Left colon (tissue), 2 donors: ENCODE measurements at regions of chr15 and their contacts with region 1.

Region 1: GRCh38 chr15:45268135-45268534 is 16.1 kb downstream of the SLC28A2 start:
- DNase-seq: peak in 1 of 2 donors; percentile 53
- ATAC-seq: peak; percentile 67

Region 2: GRCh38 chr15:45212493-45212892 is 55.6 kb before region 1 on chr15:
- intact Hi-C with region 1: loop called in 1 of 2 experiments (anchors 10 kb)
- DNase-seq: no peak
- ATAC-seq: no peak

Region 3: DNA sequence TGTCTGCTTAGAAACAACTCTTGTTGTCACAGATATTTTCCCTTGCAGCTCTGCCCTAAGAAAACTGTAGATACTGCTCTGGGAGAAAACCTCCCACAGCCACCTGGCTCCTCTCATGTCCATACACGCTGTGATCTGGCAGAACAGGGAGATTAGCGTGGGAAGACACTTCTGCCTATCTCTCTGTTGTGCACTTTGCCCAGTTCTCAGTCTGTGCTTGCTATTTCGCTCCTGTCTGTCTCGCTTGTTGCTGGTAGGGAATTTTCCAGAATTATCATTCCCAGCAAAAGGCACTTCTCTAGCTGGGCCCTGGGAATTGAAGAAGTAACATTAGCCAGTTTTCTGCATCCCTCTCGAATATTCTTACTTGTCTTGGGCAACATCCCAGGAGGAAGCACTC is 118.3 kb after region 1 on chr15:
- intact Hi-C with region 1: no loop called
- DNase-seq: no peak
- ATAC-seq: peak; percentile 50

Region 4: GRCh38 chr15:45429974-45430792 is 162.0 kb after region 1 on chr15:
- intact Hi-C with region 1: no loop called
- DNase-seq: peak; percentile 80 to 95
- ATAC-seq: peak; percentile 71